Psoas muscle (tissue), 8 donors: ENCODE measurements at regions of chr17 and their contacts with region 1.

Region 1: GRCh38 chr17:63819585-63820537 is 7.4 kb upstream of the PSMC5 start:
- DNase-seq: no peak
- ATAC-seq: peak in 2 of 4 donors; percentile 6 to 13
- H3K4me3 ChIP-seq: no peak overlapping the region
- H3K27ac ChIP-seq: no peak overlapping the region
- H3K4me1 ChIP-seq: peaks cover 6% of the 10 kb centered on the region
- H3K27me3 ChIP-seq: no peaks in the 10 kb centered on the region
- CTCF ChIP-seq: no peak

Region 2: DNA sequence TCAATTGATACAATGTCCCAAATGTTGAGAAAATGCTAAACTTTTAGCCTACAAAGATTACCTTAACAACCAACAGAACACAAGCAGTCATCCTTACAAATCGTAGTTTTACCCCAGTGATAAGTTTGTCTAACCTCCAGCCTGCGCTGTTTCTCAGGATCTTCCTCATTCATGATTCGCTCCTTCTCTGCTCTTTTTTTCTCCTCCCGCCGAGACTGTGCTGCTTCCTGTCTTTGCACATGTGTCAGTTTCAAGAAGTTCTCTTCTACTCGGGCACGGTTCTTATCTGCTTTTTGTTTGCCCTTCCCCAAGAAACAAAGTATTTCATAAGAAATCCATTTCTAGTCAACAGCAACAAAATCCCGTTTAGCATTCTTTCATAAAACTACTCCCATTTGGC is 68.1 kb before region 1 on chr17:
- intact Hi-C with region 1: loop called (anchors 5 to 10 kb)
- DNase-seq: no peak
- ATAC-seq: no peak
- H3K4me3 ChIP-seq: no peak overlapping the region
- H3K27ac ChIP-seq: no peak overlapping the region
- H3K4me1 ChIP-seq: no peaks in the 10 kb centered on the region
- H3K27me3 ChIP-seq: no peaks in the 10 kb centered on the region
- CTCF ChIP-seq: no peak

Region 3: GRCh38 chr17:63760771-63761539 is 58.9 kb before region 1 on chr17:
- intact Hi-C with region 1: loop called (anchors 5 to 10 kb)
- DNase-seq: no peak
- ATAC-seq: no peak
- H3K4me3 ChIP-seq: no peak overlapping the region
- H3K27ac ChIP-seq: no peak overlapping the region
- H3K4me1 ChIP-seq: no peaks in the 10 kb centered on the region
- H3K27me3 ChIP-seq: no peaks in the 10 kb centered on the region
- CTCF ChIP-seq: no peak

Region 4: GRCh38 chr17:63773381-63774140 is 46.3 kb before region 1 on chr17 and contains the start of gene CCDC47:
- intact Hi-C with region 1: loop called in 1 of 2 experiments (anchors 5 kb)
- DNase-seq: peak; percentile 98 to 99
- ATAC-seq: peak; percentile 90 to 94 (median 92)
- H3K4me3 ChIP-seq: peak within 1 kb of the TSS; percentile 89
- H3K27ac ChIP-seq: peak within 1 kb of the TSS; percentile 98
- H3K4me1 ChIP-seq: peaks cover 35% of the 10 kb centered on the region
- H3K27me3 ChIP-seq: no peaks in the 10 kb centered on the region
- CTCF ChIP-seq: no peak
- total RNA-seq, gene CCDC47: 67.4 to 138 (median 114) TPM

Region 5: DNA sequence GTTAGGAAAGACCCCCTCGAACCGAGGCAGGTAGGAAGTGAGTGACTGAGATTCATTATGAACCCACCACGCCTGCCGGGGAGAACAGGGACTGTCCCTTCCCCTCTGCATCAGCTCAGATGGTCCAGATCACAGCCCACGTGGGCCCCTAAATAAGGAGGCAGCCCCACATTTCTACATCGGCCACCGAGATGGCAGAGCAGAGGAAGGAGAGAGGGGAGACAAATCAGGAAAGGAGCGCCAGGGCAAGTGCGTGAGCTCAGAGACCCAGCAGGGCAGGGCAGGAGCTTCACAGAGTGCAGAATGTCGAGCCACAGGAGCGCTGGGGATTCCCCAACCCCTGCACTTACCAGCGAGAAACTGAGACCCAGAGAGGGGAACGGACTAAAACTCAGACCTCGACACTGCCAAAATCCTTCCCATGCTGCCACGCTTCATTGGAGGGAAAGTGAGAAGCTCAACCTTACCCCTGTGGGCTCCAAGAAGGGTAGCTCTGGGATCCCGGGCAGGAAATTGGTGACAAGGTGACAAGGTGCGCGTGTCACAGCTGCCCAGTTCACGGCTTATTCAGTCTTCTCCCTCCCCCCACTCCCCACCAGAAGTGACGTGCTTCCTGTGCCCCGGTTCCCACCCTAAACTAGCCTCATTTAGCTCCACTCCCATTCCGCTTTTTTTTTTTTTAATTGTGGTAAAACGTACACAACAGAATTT is 200.3 kb after region 1 on chr17 and contains the start of gene ICAM2:
- intact Hi-C with region 1: no loop called
- DNase-seq: peak; percentile 53 to 78
- ATAC-seq: peak; percentile 60 to 72 (median 70)
- H3K4me3 ChIP-seq: peak within 1 kb of the TSS; percentile 68
- H3K27ac ChIP-seq: peak within 1 kb of the TSS; percentile 72
- H3K4me1 ChIP-seq: peaks cover 9% of the 10 kb centered on the region
- H3K27me3 ChIP-seq: no peaks in the 10 kb centered on the region
- CTCF ChIP-seq: no peak
- total RNA-seq, gene ICAM2: 22.5 to 34.8 (median 26.8) TPM